ENCODE measurements at regions of chr2 and their contacts with region 1.

Region 1: GRCh38 chr2:188983427-188984064 is 9.4 kb downstream of the COL3A1 start:
- DNase-seq: no peak
- CTCF ChIP-seq: no peak

Region 2: DNA sequence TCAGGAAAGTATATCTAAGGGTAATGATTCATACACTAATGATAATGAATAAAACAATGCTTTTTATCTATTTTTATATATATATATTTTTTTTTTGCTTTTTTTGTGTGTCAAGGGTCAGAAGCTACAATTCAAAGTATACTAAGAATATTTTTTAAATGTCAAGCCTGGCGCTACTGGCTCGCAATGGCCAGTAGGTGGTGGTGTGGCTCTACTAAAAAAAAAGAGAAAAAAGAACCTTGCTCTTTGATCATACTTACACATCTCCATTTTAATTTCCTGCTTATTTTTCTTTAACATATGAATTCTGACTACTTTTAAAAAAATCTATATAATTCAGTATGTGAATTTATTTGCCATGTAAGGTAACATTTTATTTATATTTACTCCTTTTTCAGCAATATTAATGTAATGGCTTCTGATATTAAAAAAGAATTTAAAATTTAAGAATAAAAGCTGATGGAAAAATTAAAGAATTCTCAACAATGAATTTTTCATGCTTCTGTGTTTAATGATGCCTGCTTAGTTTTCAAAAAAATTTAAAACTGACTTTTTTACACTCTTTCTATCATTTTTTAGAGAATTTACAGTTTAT is 458.9 kb before region 1 on chr2:
- CTCF ChIA-PET with region 1: interaction called, 11 read pairs
- POLR2A ChIA-PET with region 1: no interaction called
- DNase-seq: peak; percentile 16
- CTCF ChIP-seq: peak; percentile 74

Region 3: GRCh38 chr2:188909036-188909435 is 74.5 kb before region 1 on chr2:
- CTCF ChIA-PET with region 1: no interaction called
- POLR2A ChIA-PET with region 1: no interaction called
- DNase-seq: no peak
- CTCF ChIP-seq: no peak